ENCODE measurements at regions of chr12 and their contacts with region 1.

Region 1: DNA sequence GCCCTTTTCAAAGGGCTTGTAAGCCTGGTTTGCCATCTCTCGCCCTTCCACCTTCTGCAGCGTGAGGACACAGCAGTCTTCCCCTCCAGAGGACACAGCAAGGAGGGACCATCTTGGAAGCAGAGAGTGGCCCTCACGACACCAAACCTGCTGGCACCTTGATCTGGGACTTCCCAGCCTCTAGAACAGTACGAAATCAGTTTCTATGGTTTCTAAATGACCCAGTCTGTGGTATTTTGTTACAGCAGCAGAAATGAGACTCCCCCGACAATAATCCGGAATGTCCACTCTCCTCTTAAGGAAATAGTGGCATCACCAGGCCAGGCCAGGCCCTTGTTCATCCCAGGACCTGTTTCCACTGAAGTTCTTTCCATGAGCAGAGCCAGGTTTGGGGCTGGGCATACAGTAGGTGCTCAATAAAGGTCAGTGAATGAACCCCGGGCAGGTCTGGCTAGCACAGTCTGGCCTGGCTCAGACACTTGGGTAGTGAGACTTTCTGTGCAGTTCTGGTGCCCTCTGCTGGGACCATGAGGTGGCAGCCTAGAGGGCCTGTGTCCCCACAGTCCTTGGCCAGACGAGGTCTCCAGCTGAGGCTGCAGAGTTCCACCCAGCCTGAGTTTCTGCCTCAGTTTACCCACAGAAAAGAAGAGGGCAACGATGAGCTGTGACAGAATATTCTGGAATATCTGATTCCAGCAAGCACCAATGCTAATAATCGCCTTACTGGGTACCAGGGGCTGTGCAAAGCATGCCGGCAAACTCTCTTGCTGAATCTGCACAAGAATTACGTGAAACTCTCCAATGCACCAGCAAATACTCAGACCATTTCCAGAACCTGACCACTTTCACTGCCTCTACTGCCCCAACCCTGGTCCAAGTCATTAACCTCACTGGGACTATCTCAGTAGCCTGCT is 14.0 kb downstream of the ABCB9 start:
- DNase-seq: peak; percentile 57
- H3K4me3 Mint-ChIP-seq: no peak overlapping the region
- H3K27ac Mint-ChIP-seq: no peak overlapping the region
- H3K4me1 Mint-ChIP-seq: peaks cover 12% of the 10 kb centered on the region
- H3K27me3 Mint-ChIP-seq: no peaks in the 10 kb centered on the region

Region 2: GRCh38 chr12:122793685-122794106 is 158.5 kb before region 1 on chr12:
- intact Hi-C with region 1: loop called (anchors 1 kb)
- DNase-seq: no peak
- H3K4me3 Mint-ChIP-seq: no peak overlapping the region
- H3K27ac Mint-ChIP-seq: no peak overlapping the region
- H3K4me1 Mint-ChIP-seq: peaks cover 2% of the 10 kb centered on the region
- H3K27me3 Mint-ChIP-seq: no peaks in the 10 kb centered on the region

Region 3: GRCh38 chr12:122860346-122861090 is 91.7 kb before region 1 on chr12:
- intact Hi-C with region 1: loop called (anchors 1 kb)
- DNase-seq: peak; percentile 67
- H3K4me3 Mint-ChIP-seq: no peak overlapping the region
- H3K27ac Mint-ChIP-seq: no peak overlapping the region
- H3K4me1 Mint-ChIP-seq: no peaks in the 10 kb centered on the region
- H3K27me3 Mint-ChIP-seq: no peaks in the 10 kb centered on the region

Region 4: DNA sequence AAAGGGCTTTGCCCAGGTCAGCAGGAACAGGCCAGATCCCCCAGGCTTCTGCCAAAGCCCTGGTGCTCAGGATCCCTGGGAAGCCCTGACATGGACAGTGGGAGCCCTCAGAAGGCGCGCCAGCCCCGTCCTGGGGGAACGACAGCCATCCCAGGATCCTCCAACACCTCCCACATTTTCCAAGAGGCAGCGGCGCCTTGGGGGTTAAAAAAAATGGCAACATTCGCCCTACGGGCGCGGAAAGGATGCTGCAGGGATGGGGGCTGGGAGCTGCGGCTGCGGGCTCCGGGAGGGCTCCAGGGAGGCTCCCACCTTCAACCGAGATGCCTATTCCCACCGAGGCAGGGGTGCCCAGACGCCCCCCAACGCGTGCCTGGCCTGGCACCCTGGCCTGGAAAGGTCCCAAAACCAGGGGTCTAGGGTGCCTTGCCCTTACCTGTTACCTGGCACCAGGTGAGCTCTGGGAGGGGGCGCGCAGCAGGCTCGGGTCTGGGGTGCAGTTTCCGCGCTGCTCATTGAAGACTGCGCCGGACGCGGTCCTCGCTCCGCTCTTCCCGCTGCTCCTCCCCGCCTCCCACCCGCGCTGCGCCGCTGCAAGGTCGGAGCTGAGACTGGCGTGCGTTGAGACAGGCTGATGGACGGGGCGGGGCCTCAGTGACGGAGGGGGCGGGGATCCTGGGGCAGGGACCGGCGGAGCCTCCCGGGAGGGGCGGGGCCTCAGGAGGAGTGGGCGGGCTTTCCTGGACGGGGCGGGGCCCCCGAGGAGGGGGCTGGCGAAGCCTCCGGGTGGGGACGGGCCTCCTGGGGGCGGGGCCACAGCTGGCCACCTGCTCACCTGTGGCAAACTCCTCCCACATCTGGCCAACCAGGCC is 13.9 kb after region 1 on chr12 and contains the start of gene ABCB9:
- intact Hi-C with region 1: no loop called
- DNase-seq: peak; percentile 85
- H3K4me3 Mint-ChIP-seq: peak within 1 kb of the TSS; percentile 33
- H3K27ac Mint-ChIP-seq: no peak within 1 kb of the TSS
- H3K4me1 Mint-ChIP-seq: peaks cover 4% of the 10 kb centered on the region
- H3K27me3 Mint-ChIP-seq: no peaks in the 10 kb centered on the region
- total RNA-seq, gene ABCB9: 4.4 and 5.4 TPM in 2 replicates